Psoas muscle (tissue), 8 donors: ENCODE measurements at regions of chr16 and their contacts with region 1.

Region 1: DNA sequence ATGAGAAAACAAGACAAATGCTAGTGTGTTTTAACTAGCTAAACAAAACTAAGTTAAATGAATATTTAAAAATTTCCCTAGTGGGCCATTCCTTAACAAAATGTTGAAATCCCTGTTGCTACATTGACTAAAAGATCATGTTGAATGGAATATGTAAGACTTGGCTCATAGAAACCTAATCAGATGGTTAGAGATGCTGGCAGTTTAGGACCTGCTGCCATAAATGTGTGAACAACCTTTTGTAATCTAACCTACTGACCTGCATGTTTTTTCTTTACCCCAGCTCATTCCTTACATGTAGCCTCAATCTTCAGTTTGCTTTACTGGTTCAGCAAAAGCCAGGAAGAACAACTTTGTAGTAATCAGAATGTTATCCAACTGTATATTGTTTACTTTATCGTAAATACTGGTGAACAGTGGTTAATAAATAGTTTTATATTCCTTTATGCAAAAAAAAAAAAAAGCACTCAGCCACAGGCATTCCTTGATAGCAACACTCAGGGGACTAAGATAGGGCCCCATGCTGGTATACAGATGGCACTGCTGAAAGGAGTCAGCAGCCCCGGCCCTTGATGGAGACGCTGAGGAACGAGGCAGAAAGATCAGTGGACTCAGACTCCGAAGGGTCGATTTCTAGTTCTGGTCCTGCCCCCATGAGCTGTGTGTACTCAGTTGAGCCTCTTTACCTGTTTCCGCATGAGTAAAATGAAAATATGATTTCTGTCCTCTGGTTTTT is 78.2 kb downstream of the MARF1 start:
- DNase-seq: no peak
- ATAC-seq: no peak
- H3K4me3 ChIP-seq: no peak overlapping the region
- H3K27ac ChIP-seq: peak overlapping the region; percentile 81
- H3K4me1 ChIP-seq: peaks cover 11% of the 10 kb centered on the region
- H3K27me3 ChIP-seq: no peaks in the 10 kb centered on the region
- CTCF ChIP-seq: no peak

Region 2: DNA sequence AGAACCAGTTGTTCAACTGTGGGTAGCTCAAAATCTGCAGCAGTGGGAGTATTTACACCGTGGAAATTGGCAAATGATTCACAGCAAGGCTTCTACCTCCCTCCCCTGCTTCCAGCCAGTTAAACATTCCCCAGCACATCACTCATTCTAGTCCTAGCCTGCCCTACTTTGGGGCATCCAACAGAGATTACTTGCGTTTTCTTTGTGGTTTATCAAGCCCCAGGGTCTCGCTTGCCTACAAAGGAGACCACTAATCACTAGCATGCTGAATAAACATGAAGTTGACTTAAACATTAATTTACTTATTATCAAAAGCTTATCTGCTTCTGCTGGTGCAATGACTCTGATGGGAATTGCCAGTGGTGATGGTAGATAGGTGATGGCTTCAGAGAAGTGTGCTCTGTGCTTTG is 16.3 kb before region 1 on chr16:
- intact Hi-C with region 1: no loop called
- DNase-seq: no peak
- ATAC-seq: no peak
- H3K4me3 ChIP-seq: no peak overlapping the region
- H3K27ac ChIP-seq: no peak overlapping the region
- H3K4me1 ChIP-seq: no peaks in the 10 kb centered on the region
- H3K27me3 ChIP-seq: no peaks in the 10 kb centered on the region
- CTCF ChIP-seq: no peak

Region 3: DNA sequence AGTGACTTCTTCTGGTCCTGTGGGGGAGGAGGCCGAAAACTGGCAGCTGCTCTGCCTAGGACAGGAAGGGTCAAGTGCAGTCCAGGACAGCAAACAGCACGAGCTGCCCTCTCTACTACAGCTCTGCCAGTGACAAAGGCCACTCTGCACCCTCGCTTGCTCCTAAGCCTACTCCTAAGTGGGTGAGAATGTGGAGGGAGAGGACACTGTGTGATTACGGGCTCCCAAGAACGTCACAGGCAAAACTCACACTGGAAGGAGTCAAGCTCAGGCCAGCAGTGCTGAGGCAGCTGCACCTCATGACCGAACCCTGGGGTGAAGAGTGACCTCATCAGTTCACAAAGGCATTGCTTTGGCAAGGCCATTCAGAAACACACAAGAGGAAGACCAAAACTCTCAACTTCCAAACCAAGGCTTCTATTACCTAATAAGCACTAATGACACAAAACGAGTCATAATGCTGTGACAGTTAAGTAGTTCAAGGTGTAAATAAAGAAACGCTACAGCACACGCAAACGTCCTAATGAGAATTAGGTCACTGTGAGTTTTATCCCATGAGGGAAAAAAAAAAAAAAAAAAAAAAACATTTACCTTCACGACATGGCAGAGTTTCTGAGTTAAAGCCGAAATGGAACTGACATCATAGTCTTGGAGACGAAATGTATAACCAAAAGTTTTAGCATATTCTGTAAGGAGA is 43.1 kb after region 1 on chr16:
- intact Hi-C with region 1: loop called in 1 of 2 experiments (anchors 5 kb)
- DNase-seq: peak; percentile 78 to 92
- ATAC-seq: peak; percentile 79 to 92 (median 90)
- H3K4me3 ChIP-seq: no peak overlapping the region
- H3K27ac ChIP-seq: peak overlapping the region; percentile 78
- H3K4me1 ChIP-seq: peaks cover 49% of the 10 kb centered on the region
- H3K27me3 ChIP-seq: no peaks in the 10 kb centered on the region
- CTCF ChIP-seq: no peak

Region 4: DNA sequence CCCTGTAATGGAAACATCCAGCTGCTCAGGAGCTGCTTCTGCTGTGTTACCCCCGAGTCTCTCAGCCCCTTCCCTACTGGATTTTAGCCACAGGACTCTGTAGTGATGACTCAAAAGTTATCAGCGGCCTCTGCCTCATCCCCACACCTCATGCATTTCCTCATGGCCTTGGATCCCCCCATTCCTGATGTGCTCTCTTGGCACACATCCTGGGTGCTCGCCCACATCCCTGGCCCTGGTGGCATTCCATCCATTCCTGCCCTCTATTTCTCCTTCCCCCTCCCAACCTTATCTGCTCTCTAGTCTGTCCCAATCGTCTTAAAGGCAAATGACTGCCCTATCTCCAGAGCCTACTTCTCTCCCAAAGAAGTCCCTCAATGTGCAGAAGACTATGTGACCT is 53.6 kb after region 1 on chr16:
- intact Hi-C with region 1: no loop called
- DNase-seq: no peak
- ATAC-seq: peak in 2 of 4 donors; percentile 36 to 71
- H3K4me3 ChIP-seq: no peak overlapping the region
- H3K27ac ChIP-seq: no peak overlapping the region
- H3K4me1 ChIP-seq: peaks cover 33% of the 10 kb centered on the region
- H3K27me3 ChIP-seq: no peaks in the 10 kb centered on the region
- CTCF ChIP-seq: no peak